ENCODE measurements at regions of chr14 and their contacts with region 1.

Region 1: DNA sequence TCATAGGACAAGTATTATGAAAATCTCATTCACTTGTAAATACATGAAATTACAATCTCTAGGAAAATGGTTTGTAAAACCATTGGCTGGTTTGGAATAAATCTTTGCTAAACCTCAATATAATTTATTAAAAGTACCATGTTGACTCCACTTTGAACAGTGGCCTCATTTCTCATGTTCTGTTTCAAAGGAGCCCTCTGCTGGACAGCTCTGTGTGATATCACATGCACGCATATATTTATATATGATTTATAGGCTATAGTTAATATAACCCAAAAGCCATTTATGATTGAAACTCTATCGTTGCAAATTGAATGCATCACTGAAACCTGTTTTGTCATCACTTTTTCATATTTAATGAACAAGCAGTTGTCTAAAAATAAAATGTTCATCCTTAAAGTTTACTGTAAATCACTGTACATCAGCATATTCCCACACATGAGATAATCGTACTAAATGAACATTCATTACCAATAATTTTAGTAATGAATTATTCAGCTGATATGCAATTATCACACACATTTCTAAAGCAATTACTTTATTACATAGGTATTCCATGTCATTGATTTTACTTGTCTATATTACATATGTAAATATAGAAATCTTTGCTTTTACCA is 493.8 kb downstream of the NPAS3 start:
- DNase-seq: no peak
- ATAC-seq: no peak
- H3K4me3 ChIP-seq: no peak overlapping the region
- H3K27ac ChIP-seq: no peak overlapping the region
- H3K4me1 ChIP-seq: no peaks in the 10 kb centered on the region
- H3K27me3 ChIP-seq: no peaks in the 10 kb centered on the region
- CTCF ChIP-seq: peak; percentile 34

Region 2: DNA sequence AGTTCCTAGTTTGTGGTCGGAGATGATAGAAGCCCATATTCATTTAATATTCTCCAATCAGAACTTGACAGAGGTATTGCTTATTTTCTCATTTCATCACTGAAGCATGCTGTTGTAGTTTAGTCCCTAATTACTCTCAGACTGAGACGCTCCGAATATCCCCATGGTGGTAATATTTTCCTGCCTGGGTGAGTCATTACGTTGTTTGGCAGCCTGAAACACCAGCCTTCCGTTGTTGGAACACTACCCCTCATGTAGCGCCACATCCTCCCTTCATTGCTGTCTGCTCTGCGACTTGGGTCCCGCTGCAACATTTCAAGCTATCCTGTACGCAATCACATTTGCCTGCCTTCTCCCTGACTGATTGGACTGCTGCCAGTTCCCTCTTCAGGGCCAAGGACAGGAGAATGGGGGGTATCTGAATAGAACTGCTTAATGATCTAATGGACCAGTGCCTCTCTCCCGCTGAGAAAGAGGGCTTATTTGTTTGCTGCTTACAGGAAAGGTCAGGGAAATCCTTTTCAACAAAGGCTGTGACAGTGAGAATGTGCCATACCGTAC is 124.7 kb before region 1 on chr14:
- intact Hi-C with region 1: no loop called
- DNase-seq: peak; percentile 41 to 64
- ATAC-seq: peak in 3 of 4 donors; percentile 47 to 77 (median 64)
- H3K4me3 ChIP-seq: no peak overlapping the region
- H3K27ac ChIP-seq: no peak overlapping the region
- H3K4me1 ChIP-seq: no peaks in the 10 kb centered on the region
- H3K27me3 ChIP-seq: no peaks in the 10 kb centered on the region
- CTCF ChIP-seq: no peak

Region 3: GRCh38 chr14:33420051-33420627 is 12.4 kb before region 1 on chr14:
- intact Hi-C with region 1: loop called in 1 of 2 experiments (anchors 1 kb)
- DNase-seq: no peak
- ATAC-seq: no peak
- H3K4me3 ChIP-seq: no peak overlapping the region
- H3K27ac ChIP-seq: no peak overlapping the region
- H3K4me1 ChIP-seq: no peaks in the 10 kb centered on the region
- H3K27me3 ChIP-seq: no peaks in the 10 kb centered on the region
- CTCF ChIP-seq: no peak

Measured in psoas muscle (tissue), 8 donors.